PC-3 (cell line): ENCODE measurements at regions of chr4 and their contacts with region 1.

Region 1: GRCh38 chr4:7295911-7296660 is 103.7 kb downstream of the SORCS2 start:
- DNase-seq: peak; percentile 26
- ATAC-seq: peak; percentile 69
- H3K4me3 ChIP-seq: no peak overlapping the region
- H3K27ac ChIP-seq: peak overlapping the region; percentile 9; the same call in 1 of the 2 replicates
- H3K4me1 ChIP-seq: no peaks in the 10 kb centered on the region
- H3K27me3 ChIP-seq: no peaks in the 10 kb centered on the region
- CTCF ChIP-seq: peak; percentile 77

Region 2: DNA sequence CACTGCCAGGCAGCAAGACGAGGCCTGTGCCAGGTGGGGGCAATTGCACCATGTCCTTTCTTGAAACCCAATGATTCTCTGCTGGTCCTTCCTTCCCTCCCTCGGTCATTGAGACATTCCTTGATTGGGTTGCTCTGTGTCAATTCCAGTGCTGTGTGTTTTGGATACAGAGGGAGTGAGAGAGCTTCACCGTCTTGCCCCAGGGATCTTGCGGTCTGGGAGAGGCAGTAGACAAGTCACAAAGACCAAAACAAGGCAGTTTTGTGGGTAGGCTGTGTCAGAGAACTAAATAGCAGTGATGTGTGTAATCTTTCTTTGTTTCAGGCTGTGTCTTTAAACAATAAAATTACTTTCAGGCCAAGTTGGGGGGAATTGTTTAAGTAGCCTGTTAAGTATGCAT is 291.8 kb before region 1 on chr4:
- CTCF ChIA-PET with region 1: no interaction called
- POLR2A ChIA-PET with region 1: no interaction called
- intact Hi-C with region 1: no loop called
- DNase-seq: no peak
- ATAC-seq: no peak
- H3K4me3 ChIP-seq: no peak overlapping the region
- H3K27ac ChIP-seq: no peak overlapping the region
- H3K4me1 ChIP-seq: peaks cover 7% of the 10 kb centered on the region
- H3K27me3 ChIP-seq: no peaks in the 10 kb centered on the region
- CTCF ChIP-seq: no peak

Region 3: DNA sequence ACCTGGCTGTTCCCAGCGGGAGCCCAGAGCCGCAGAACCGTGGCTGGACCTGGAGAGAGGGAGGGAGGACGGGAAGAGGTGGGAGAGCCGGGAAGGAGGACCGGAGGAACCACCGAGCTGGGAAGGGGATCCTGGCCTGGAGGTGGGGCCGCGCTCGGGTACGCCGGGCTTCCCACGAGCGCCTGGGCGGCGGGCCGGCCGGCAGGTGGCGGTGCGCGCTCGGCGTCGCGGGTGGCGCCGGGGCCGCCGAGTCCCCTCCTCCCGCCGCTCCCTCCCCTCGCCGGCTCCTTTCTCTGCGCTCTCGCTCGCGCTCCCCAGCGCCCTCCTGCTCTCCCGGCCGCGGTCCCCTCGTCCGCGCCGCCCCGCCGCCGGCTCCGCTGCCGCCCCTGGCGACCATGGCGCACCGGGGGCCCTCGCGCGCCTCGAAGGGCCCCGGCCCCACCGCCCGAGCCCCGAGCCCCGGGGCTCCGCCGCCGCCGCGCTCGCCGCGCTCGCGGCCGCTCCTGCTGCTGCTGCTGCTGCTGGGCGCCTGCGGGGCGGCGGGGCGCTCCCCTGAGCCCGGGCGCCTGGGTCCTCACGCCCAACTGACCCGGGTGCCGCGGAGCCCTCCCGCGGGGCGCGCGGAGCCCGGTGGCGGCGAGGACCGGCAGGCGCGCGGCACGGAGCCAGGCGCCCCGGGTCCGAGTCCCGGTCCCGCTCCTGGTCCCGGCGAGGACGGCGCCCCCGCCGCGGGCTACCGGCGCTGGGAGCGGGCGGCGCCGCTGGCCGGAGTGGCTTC is 103.6 kb before region 1 on chr4 and contains the start of gene SORCS2:
- CTCF ChIA-PET with region 1: interaction called, 12 read pairs
- POLR2A ChIA-PET with region 1: no interaction called
- intact Hi-C with region 1: loop called (anchors 1 kb)
- DNase-seq: peak; percentile 68
- ATAC-seq: peak; percentile 83
- H3K4me3 ChIP-seq: peak within 1 kb of the TSS; percentile 74
- H3K27ac ChIP-seq: peak within 1 kb of the TSS; percentile 32
- H3K4me1 ChIP-seq: peaks cover 44% of the 10 kb centered on the region
- H3K27me3 ChIP-seq: no peaks in the 10 kb centered on the region
- CTCF ChIP-seq: peak; percentile 46
- total RNA-seq, gene SORCS2: 4.1 and 6.6 TPM in 2 replicates